Spleen (tissue), 13 donors: ENCODE measurements at regions of chr11 and their contacts with region 1.

Region 1: DNA sequence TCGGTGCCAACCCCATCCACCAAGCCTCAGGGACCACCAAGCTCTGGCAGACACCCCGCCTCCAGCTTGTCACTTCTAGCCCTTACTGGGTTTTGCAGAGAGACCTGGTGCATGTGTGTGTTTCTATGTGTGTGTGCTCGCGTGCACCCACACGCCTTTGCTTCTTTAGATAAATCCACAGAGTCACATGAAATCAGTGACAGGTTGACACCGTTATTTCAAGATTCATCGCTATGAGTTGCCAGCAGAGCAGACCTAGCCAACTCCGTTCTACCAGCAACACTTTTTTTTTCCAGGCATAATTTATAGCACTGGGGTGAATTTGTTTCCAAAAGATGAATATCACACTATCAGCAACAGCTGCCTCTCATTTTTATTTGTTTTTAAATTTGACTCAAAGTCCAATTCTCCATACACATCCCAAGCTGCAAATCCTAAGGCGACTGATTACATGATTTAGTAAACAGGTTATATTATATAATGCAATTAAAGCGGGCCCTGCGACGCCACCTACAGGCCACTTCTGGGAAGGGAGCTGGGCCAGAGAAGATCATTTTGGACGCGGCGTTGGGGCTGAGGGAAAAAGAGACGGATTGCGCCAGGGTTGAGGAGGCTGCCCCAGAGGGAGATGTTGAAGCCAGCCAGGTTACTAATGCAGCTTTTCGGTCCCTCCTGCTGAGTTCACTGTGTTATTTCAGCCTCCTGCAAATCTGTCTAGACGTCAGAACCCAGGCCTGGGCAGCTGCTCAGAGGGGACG is 150.5 kb downstream of the FEZ1 start:
- DNase-seq: peak; percentile 78
- H3K4me3 ChIP-seq: no peak overlapping the region
- H3K27ac ChIP-seq: peak overlapping the region in 3 of 8 donors; percentile 22 to 41 (median 34)
- H3K4me1 ChIP-seq: peaks cover 2 to 25% (median 6%) of the 10 kb centered on the region in 6 donors
- H3K27me3 ChIP-seq: peaks cover 0 to 51% (median 0%) of the 10 kb centered on the region in 7 donors
- CTCF ChIP-seq: peak; percentile 52 to 86 (median 75)
- POLR2A ChIP-seq: no peak

Region 2: GRCh38 chr11:125091247-125091876 is 254.2 kb before region 1 on chr11:
- intact Hi-C with region 1: loop called (anchors 10 kb)
- DNase-seq: peak; percentile 41
- H3K4me3 ChIP-seq: no peak overlapping the region
- H3K27ac ChIP-seq: peak overlapping the region in 3 of 8 donors; percentile 21 to 45 (median 26)
- H3K4me1 ChIP-seq: peaks cover 0 to 15% (median 10%) of the 10 kb centered on the region in 6 donors
- H3K27me3 ChIP-seq: no peaks in the 10 kb centered on the region
- CTCF ChIP-seq: peak; percentile 27 to 77 (median 59)
- POLR2A ChIP-seq: no peak

Region 3: DNA sequence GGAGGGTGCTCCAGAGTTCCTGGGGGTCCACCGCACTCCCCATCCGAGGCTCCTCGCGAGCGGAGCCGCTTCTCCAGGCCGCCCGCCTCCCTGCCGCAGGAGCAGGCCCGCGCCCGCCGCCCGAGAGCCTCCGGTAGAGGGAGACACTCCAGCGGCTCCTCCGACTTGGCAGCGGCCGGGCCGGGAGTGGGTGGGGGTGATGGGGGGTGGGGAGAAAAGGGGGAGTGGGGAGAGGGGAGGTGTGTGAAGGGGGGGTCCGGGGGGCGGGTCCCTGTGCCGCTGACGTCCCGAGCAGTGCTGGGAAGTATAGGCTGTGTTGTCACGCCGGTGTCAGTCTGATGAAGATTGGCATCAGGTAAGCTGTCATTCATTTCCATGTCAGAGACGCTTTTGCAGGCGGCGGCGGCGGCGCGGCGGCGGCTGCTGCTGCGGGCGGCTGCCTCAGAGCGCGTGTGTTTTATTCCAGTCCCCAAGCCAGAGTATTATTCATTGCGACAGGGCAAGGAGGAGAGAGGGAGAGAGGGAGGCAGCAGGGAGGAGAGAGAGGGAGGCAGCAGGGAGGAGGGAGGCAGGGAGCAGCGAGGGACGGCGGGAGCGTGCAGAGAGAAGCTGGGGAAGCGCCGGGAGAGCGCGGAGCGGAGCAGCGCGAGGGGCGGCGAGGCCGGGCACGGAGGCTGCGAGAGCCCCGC is 181.0 kb before region 1 on chr11 and contains the start of gene PKNOX2:
- intact Hi-C with region 1: loop called (anchors 5 kb)
- DNase-seq: peak; percentile 88
- H3K4me3 ChIP-seq: peak within 1 kb of the TSS; percentile 41 to 77 (median 52)
- H3K27ac ChIP-seq: peak within 1 kb of the TSS in 7 of 8 donors; percentile 59 to 82 (median 76)
- H3K4me1 ChIP-seq: peaks cover 0 to 55% (median 31%) of the 10 kb centered on the region in 6 donors
- H3K27me3 ChIP-seq: peaks cover 0 to 89% (median 37%) of the 10 kb centered on the region in 7 donors
- CTCF ChIP-seq: peak in 9 of 11 experiments; percentile 27 to 73 (median 61)
- POLR2A ChIP-seq: no peak
- total RNA-seq, gene PKNOX2: 2.7 to 8.9 (median 4.7) TPM

Region 4: DNA sequence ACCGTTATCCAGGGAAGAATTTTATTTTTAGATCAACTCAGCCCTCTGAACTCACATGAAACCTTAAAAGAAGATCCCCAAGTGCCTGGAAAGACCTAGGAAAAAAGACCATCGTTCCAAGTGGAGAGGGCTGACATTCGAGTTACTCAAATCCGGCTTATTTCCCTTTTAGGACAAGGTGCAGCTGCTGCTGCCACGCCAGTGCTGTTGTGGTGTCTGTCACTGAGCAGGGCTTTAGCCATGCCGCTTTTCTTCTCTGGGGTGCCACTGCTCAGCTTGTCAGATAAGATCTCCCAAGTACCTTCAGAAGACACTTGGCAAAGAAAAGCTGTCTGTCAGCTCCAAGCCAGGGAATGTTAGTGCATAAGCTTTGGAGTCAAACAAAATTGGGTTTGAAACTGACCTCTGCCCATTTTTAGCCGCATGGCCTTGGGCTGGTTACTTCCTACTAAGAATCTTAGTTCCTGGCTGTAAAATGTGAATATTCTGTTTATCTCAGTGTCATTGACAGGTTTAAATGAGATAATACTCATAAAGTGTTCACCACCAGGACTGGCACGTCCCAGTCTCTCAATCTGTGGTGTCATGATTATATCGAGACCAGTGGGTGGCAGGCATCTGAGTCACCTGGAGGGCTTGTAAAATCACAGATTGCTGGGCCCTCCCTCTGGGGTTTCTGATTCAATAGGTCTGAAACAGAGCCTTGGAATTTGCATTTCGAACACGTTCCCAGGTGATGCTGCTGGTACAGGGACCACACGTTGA is 63.6 kb before region 1 on chr11:
- intact Hi-C with region 1: no loop called
- DNase-seq: no peak
- H3K4me3 ChIP-seq: no peak overlapping the region
- H3K27ac ChIP-seq: peak overlapping the region in 2 of 8 donors; percentile 7 to 34
- H3K4me1 ChIP-seq: peaks cover 0 to 16% (median 6%) of the 10 kb centered on the region in 6 donors
- H3K27me3 ChIP-seq: peaks cover 0 to 7% (median 0%) of the 10 kb centered on the region in 7 donors
- CTCF ChIP-seq: no peak
- POLR2A ChIP-seq: no peak